Tibial artery (tissue), 4 donors: ENCODE measurements at regions of chr16 and their contacts with region 1.

Region 1: DNA sequence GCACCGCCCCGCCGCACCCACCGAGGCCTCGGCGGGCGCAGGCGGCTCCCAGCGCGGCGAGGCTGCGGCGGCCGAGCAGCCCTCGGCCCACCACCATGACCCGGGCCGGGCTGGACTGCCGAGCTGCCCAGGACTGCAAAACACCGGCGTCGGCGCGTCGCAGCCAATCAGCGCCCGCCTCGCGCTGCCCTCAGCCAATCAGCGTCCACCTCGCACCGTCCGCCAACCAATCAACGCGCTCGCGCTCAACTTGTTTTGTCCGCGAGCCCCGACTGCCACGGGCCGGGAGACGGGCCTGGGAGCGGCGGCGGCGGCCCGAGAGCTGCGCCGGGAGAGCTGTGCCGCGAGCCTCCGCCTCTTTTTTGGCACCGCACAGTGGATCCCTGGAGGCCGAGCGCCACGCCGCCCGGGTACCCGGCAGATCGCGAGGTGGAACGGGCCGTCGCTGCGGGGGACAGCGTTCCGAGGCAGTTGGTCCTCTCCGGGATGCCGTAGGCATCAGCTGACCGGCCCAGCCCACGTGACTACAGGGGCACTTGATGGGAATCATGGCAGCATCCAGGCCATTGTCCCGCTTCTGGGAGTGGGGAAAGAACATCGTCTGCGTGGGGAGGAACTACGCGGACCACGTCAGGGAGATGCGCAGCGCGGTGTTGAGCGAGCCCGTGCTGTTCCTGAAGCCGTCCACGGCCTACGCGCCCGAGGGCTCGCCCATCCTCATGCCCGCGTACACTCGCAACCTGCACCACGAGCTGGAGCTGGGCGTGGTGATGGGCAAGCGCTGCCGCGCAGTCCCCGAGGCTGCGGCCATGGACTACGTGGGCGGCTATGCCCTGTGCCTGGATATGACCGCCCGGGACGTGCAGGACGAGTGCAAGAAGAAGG is at the starts of genes FAHD1 and HAGH:
- DNase-seq: peak; percentile 93 to 96
- H3K4me3 ChIP-seq: peak within 1 kb of the TSS; percentile 74 to 89
- H3K27ac ChIP-seq: peak within 1 kb of the TSS; percentile 77 to 84
- H3K4me1 ChIP-seq: peaks cover 0 to 53% (median 32%) of the 10 kb centered on the region in 4 donors
- H3K27me3 ChIP-seq: no peaks in the 10 kb centered on the region
- CTCF ChIP-seq: no peak

Region 2: GRCh38 chr16:1782352-1783091 is 44.4 kb before region 1 on chr16 and contains the starts of genes NUBP2 and SPSB3:
- intact Hi-C with region 1: loop called (anchors 5 kb)
- DNase-seq: peak; percentile 100
- H3K4me3 ChIP-seq: peak within 1 kb of the TSS; percentile 74 to 94
- H3K27ac ChIP-seq: peak within 1 kb of the TSS; percentile 75 to 78
- H3K4me1 ChIP-seq: peaks cover 0 to 72% (median 40%) of the 10 kb centered on the region in 4 donors
- H3K27me3 ChIP-seq: no peaks in the 10 kb centered on the region
- CTCF ChIP-seq: no peak